ENCODE measurements at regions of chr2 and their contacts with region 1.

Region 1: DNA sequence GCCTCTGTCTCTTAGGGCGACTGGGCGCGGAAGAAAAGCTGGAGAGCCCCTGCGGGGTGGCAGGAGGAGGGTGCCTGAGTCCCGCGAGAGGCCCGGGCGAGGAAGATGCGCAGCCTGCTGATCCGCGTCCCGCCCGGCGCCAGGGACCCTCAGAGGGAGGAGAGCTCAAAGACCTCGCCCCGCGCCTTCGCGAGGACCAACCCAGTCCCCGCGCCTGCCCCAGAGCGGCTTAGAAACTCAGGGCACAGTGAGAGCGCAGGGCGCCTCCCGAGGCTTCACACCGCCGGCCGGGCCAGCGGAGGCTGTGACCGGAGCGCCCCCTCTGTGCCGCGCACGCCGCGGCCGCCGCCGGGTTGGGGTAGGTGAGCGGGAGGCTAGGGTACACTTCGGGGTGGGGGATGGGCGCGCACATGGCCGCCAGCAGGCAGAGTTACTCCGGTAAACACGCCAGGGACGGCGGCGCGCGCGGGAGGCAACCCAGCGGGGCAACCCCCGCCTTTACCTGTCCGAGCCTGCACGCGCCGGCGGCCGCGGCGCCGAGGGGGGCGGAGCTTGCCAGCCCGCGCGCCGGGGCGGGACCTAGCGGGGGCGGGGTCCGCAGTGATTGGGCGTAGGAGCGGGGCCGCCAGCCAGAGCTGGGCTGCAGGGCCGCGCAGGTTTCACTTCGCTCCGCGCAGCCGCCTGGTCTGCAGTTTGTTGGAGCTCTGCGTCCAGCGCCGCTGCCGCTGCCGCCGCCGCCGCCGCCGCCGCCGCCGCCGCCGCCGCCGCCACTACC is at the start of gene BCL2L11:
- DNase-seq: peak; percentile 85 to 93
- ATAC-seq: peak; percentile 54 to 59
- H3K4me3 ChIP-seq: peak within 1 kb of the TSS; percentile 81 to 98 (median 82)
- H3K27ac ChIP-seq: peak within 1 kb of the TSS; percentile 91 to 99 (median 94)
- H3K4me1 ChIP-seq: peaks cover 26 to 35% of the 10 kb centered on the region in 2 donors
- H3K27me3 ChIP-seq: peaks cover 0 to 5% (median 0%) of the 10 kb centered on the region in 3 donors
- CTCF ChIP-seq: no peak
- POLR2A ChIP-seq: peak; percentile 97 to 99
- total RNA-seq, gene BCL2L11: 4.8 to 18.8 (median 13.7) TPM

Region 2: DNA sequence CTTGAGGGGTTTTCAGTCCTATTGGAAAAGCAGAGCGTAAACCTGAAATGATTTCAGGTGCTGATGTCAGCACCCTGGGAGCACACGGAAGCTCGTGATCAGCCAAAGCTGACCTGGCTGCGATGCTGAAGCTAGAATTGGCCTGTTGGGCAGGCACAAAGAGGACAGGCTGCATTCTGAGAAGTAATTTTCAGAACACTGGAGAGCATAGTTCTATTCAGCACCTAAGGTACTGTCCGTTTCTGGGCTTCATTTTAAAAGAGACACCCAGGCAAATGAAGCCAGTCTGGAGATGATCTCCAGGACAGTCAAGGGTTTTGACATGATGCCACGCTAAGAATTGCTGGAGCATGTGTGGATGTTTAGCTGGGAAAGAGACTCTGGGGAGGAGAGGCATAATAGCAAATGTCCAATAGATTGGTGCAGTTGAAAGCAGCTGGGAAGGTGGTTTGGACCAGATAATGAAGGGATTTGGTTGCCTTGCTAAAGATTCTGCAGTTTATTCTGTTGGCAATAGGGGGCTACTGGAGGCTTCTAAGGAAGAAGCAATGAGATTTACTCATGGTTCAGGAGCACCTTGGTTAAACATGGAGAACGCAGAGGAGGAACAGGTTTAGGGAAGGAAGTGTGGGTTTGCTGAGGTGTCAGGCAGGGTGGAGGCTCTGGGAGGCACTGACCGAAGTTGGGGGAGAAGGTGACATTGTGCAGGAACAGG is 301.5 kb before region 1 on chr2:
- in situ Hi-C with region 1: no loop called
- intact Hi-C with region 1: loop called (anchors 5 kb)
- DNase-seq: no peak
- ATAC-seq: no peak
- H3K4me3 ChIP-seq: no peak overlapping the region
- H3K27ac ChIP-seq: peak overlapping the region in 2 of 4 donors; percentile 55 to 97
- H3K4me1 ChIP-seq: peaks cover 38 to 45% of the 10 kb centered on the region in 2 donors
- H3K27me3 ChIP-seq: no peaks in the 10 kb centered on the region
- CTCF ChIP-seq: no peak
- POLR2A ChIP-seq: no peak

Region 3: GRCh38 chr2:111135910-111136297 is 15.5 kb after region 1 on chr2:
- in situ Hi-C with region 1: no loop called
- intact Hi-C with region 1: loop called (anchors 1 kb)
- DNase-seq: peak; percentile 53 to 79
- ATAC-seq: peak; percentile 61 to 68
- H3K4me3 ChIP-seq: no peak overlapping the region
- H3K27ac ChIP-seq: peak overlapping the region; percentile 61 to 74 (median 62)
- H3K4me1 ChIP-seq: peaks cover 44 to 67% of the 10 kb centered on the region in 2 donors
- H3K27me3 ChIP-seq: no peaks in the 10 kb centered on the region
- CTCF ChIP-seq: peak; percentile 45 to 70 (median 63)
- POLR2A ChIP-seq: no peak

Region 4: DNA sequence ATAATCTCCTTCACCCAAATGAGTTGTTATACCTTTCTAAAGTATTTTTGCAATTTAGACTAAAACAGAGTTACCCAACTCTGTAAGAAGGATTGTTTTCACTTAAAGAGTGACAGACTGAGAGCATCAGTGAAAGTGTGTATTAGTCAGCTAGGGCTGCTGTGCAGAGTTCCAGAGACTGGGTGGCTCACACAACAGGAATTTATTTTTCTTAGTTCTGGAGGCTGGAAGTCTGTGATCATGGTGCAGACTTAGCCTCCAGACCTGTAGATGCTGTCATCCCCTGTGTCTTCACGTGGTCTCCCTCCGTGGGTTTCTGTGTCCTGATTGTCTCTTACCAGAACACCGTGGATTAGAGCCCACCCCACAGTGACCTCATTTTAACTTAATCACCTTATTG is 40.3 kb after region 1 on chr2:
- in situ Hi-C with region 1: no loop called
- intact Hi-C with region 1: loop called (anchors 2 kb)
- DNase-seq: no peak
- ATAC-seq: no peak
- H3K4me3 ChIP-seq: no peak overlapping the region
- H3K27ac ChIP-seq: peak overlapping the region in 1 of 4 donors; percentile 74
- H3K4me1 ChIP-seq: peaks cover 34 to 59% of the 10 kb centered on the region in 2 donors
- H3K27me3 ChIP-seq: no peaks in the 10 kb centered on the region
- CTCF ChIP-seq: no peak
- POLR2A ChIP-seq: no peak

Region 5: DNA sequence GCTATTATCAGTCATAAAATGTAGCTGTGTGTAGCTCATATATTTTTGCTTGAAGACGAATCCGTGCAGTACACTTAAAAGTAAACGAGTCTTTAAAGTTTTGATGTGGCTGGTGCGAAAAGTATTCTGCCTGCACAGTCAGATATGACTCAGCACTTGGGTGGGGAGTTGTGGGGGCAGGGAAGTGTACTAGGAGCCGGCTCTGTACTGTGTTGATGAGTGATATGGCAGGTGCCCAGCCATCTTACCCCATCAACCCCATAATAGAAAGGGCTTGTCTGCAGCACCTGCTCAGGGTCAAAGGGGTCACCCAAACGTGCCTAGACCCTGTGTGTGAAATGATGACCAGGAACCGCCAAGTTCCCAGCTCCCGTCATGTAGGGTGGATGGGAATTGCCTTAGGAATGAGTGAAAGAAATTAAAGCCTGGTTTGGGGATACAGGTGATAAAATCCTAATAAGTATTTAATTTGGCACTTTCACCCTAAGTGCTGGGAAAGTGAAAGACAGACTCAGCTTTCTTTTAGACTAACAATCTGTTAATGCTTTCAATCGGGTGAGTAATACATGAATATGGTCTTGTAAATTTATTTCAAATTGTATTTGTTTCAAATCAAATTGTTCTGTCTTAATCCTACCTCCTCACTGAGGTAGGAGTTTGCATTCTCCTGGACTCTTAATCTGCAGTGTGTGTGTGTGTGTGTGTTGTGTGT is 48.2 kb after region 1 on chr2:
- in situ Hi-C with region 1: no loop called
- intact Hi-C with region 1: loop called (anchors 2 kb)
- DNase-seq: peak; percentile 45 to 85
- ATAC-seq: peak; percentile 90 to 96
- H3K4me3 ChIP-seq: no peak overlapping the region
- H3K27ac ChIP-seq: peak overlapping the region; percentile 3 to 50 (median 16)
- H3K4me1 ChIP-seq: peaks cover 8 to 24% of the 10 kb centered on the region in 2 donors
- H3K27me3 ChIP-seq: no peaks in the 10 kb centered on the region
- CTCF ChIP-seq: no peak
- POLR2A ChIP-seq: no peak

Region 6: GRCh38 chr2:111698743-111699554 is 578.5 kb after region 1 on chr2:
- in situ Hi-C with region 1: loop called (anchors 10 to 25 kb)
- intact Hi-C with region 1: loop called (anchors 10 kb)
- DNase-seq: peak; percentile 79 to 90
- ATAC-seq: peak; percentile 86 to 87
- H3K4me3 ChIP-seq: peak overlapping the region in 2 of 4 donors; percentile 10 to 35
- H3K27ac ChIP-seq: peak overlapping the region; percentile 39 to 73 (median 70)
- H3K4me1 ChIP-seq: peaks cover 24 to 27% of the 10 kb centered on the region in 2 donors
- H3K27me3 ChIP-seq: no peaks in the 10 kb centered on the region
- CTCF ChIP-seq: peak in 1 of 5 experiments; percentile 32
- POLR2A ChIP-seq: peak in 1 of 2 donors; percentile 23

Region 7: DNA sequence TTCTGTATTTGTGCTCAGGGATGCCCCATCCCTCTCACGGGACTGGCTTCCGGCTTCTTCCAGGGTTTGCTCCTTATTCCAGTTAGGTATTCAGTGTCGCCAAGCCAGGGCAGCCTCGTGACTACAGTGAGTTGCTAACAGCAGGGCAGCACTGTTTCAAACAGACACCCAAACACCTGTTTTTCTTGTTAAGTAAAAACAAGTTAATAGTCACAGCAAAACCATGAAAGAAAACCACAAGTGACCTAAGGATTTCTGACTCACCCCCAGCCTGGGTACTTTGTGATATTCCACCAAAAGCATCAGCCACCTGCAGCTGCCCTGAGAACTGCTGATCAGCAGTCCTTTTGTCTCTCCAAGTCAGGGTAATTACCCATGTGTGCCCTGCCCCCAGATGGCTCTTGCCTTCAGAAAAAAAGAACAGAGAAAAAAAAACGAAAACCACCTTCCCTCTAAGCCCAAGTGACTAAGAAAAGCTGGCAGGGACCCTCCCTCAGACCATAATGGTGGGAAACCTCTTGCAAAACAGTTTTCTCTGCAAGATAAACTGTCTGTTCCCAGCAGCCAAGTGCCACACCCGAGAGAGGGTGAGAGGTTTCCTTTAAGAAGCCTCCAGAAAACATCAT is 585.4 kb after region 1 on chr2:
- in situ Hi-C with region 1: loop called in 3 of 4 experiments (anchors 10 to 25 kb)
- intact Hi-C with region 1: loop called (anchors 10 kb)
- DNase-seq: peak; percentile 81 to 90
- ATAC-seq: peak; percentile 58 to 80
- H3K4me3 ChIP-seq: no peak overlapping the region
- H3K27ac ChIP-seq: peak overlapping the region; percentile 27 to 78 (median 66)
- H3K4me1 ChIP-seq: peaks cover 50 to 55% of the 10 kb centered on the region in 2 donors
- H3K27me3 ChIP-seq: no peaks in the 10 kb centered on the region
- CTCF ChIP-seq: no peak
- POLR2A ChIP-seq: no peak

Measured in gastrocnemius medialis (tissue), 4 donors.